ENCODE measurements at regions of chr11 and their contacts with region 1.

Region 1: GRCh38 chr11:36265793-36266628 is 23.2 kb downstream of the COMMD9 start:
- DNase-seq: no peak
- ATAC-seq: peak; percentile 67 to 69
- H3K4me3 ChIP-seq: no peak overlapping the region
- H3K27ac ChIP-seq: no peak overlapping the region
- H3K4me1 ChIP-seq: no peaks in the 10 kb centered on the region
- H3K27me3 ChIP-seq: no peaks in the 10 kb centered on the region
- CTCF ChIP-seq: peak; percentile 52 to 83 (median 77)
- POLR2A ChIP-seq: no peak

Region 2: GRCh38 chr11:35800970-35801953 is 464.7 kb before region 1 on chr11:
- in situ Hi-C with region 1: loop called in 2 of 4 experiments (anchors 25 kb)
- intact Hi-C with region 1: no loop called
- DNase-seq: no peak
- ATAC-seq: no peak
- H3K4me3 ChIP-seq: no peak overlapping the region
- H3K27ac ChIP-seq: no peak overlapping the region
- H3K4me1 ChIP-seq: peaks cover 19 to 32% of the 10 kb centered on the region in 2 donors
- H3K27me3 ChIP-seq: no peaks in the 10 kb centered on the region
- CTCF ChIP-seq: no peak
- POLR2A ChIP-seq: no peak

Region 3: DNA sequence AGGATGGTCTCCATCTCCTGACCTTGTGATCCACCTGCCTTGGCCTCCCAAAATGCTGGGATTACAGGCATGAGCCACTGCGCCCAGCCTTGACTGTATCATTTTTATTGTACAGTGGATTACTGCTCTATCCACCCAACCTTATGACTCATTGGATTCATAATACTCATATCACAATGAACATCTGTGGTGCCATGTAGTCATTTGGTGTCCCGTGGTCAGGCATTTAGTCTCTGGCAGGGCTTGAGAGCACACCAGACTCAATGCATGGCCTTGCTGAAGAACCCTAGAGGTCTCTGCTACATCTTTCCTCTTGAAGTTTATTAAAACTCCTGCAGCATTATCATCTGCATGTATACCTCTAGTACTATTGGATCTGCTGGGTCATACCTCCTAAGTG is 420.2 kb before region 1 on chr11:
- in situ Hi-C with region 1: loop called in 2 of 4 experiments (anchors 25 kb)
- intact Hi-C with region 1: no loop called
- DNase-seq: no peak
- ATAC-seq: no peak
- H3K4me3 ChIP-seq: no peak overlapping the region
- H3K27ac ChIP-seq: no peak overlapping the region
- H3K4me1 ChIP-seq: no peaks in the 10 kb centered on the region
- H3K27me3 ChIP-seq: no peaks in the 10 kb centered on the region
- CTCF ChIP-seq: no peak
- POLR2A ChIP-seq: no peak

Region 4: DNA sequence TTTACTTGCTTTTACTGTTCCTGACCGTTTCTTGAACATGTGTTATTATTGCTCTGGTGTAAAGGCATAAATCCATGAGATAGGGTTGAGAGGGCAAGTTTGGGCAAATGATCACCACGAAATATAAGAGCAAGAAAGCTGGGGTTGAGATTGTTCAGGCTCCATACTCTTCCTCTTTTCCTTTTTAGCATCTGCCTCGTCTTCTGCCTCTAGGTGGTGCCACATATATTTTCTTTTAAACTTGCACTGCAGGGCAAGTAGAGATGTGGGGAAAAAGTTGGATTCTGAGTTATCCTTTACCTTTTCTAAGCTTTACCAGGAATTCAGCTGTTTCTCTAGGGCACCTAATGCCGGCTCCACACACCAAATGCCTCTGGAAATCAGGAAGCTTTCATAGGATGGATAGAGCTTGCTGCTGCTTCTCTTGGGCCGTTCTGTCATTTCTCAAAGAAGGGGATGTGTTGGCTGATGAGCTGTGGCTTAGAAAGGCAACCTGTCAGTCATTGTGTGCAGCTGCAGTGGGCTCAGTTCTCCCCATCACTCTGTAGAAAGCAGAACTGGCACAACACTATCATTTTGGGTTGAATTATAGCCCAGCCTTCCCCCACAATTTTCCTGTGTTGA is 223.9 kb before region 1 on chr11:
- in situ Hi-C with region 1: loop called in 2 of 4 experiments (anchors 25 kb)
- intact Hi-C with region 1: loop called (anchors 5 kb)
- DNase-seq: no peak
- ATAC-seq: no peak
- H3K4me3 ChIP-seq: no peak overlapping the region
- H3K27ac ChIP-seq: no peak overlapping the region
- H3K4me1 ChIP-seq: peaks cover 3 to 5% of the 10 kb centered on the region in 2 donors
- H3K27me3 ChIP-seq: no peaks in the 10 kb centered on the region
- CTCF ChIP-seq: peak in 2 of 5 experiments; percentile 21 to 43
- POLR2A ChIP-seq: no peak

Region 5: GRCh38 chr11:36149538-36150242 is 116.3 kb before region 1 on chr11:
- in situ Hi-C with region 1: no loop called
- intact Hi-C with region 1: loop called (anchors 10 kb)
- DNase-seq: peak; percentile 54 to 65
- ATAC-seq: peak; percentile 96 to 99
- H3K4me3 ChIP-seq: no peak overlapping the region
- H3K27ac ChIP-seq: peak overlapping the region in 3 of 4 donors; percentile 53 to 68 (median 55)
- H3K4me1 ChIP-seq: peaks cover 5% of the 10 kb centered on the region in 2 donors
- H3K27me3 ChIP-seq: no peaks in the 10 kb centered on the region
- CTCF ChIP-seq: peak in 4 of 5 experiments; percentile 18 to 45 (median 38)
- POLR2A ChIP-seq: peak in 1 of 2 donors; percentile 22